ENCODE measurements at regions of chr1 and their contacts with region 1.

Region 1: GRCh38 chr1:115980998-115981993 is 5.0 kb downstream of the SLC22A15 start:
- DNase-seq: no peak
- ATAC-seq: peak; percentile 78
- H3K4me3 ChIP-seq: no peak overlapping the region
- H3K27ac ChIP-seq: no peak overlapping the region
- H3K4me1 ChIP-seq: no peaks in the 10 kb centered on the region
- H3K27me3 ChIP-seq: no peaks in the 10 kb centered on the region
- CTCF ChIP-seq: peak; percentile 62 to 68 (median 67)
- EP300 ChIP-seq: no peak
- POLR2A ChIP-seq: no peak
- RAD21 ChIP-seq: peak; percentile 82

Region 2: DNA sequence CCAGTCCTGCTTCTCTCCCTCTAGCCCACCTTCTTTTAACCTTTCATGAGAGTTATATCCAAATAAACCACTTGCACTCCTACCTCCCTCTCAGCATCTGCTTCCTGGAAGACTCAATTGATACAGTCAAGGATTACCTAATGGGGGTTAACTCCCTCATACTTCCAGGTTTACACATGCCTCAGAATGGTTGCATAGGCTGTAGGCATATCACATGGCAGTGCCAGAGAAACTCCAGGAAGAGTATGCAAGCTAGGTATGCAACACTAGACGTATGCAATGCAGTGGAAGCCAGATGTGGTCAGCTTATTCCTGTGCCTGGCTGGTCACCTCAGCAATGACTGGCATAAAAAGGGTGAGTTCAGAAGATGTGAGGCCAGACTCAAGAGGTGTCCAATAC is 372.3 kb before region 1 on chr1:
- CTCF ChIA-PET with region 1: interaction called, 5 read pairs
- POLR2A ChIA-PET with region 1: no interaction called
- RAD21 ChIA-PET with region 1: no interaction called
- SMC1A ChIA-PET with region 1: interaction called, 3 read pairs
- in situ Hi-C with region 1: no loop called
- intact Hi-C with region 1: loop called (anchors 5 kb)
- DNase-seq: no peak
- ATAC-seq: no peak
- H3K4me3 ChIP-seq: no peak overlapping the region
- H3K27ac ChIP-seq: no peak overlapping the region
- H3K4me1 ChIP-seq: no peaks in the 10 kb centered on the region
- H3K27me3 ChIP-seq: no peaks in the 10 kb centered on the region
- CTCF ChIP-seq: no peak
- EP300 ChIP-seq: no peak
- POLR2A ChIP-seq: no peak
- RAD21 ChIP-seq: no peak

Region 3: DNA sequence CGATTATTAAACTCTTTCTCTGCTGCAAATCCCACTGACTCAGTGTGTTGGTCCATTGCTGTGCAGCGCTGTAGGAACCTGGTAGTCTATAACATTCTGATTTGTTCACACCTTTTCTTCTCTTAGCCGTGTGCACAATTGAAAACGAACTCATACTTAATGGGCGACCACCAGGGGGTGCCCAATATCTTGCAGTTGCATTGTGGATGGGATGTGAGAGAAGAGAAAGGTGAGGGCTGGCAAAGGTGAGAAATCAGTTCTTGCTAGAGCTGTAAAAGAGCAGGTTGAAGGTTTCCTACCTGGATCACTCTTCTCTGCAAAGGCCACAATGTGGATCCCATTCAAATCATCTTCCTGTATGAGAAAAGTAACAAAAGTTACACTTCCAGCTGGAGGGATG is 263.8 kb before region 1 on chr1:
- CTCF ChIA-PET with region 1: interaction called, 5 read pairs
- POLR2A ChIA-PET with region 1: no interaction called
- RAD21 ChIA-PET with region 1: interaction called, 3 read pairs
- SMC1A ChIA-PET with region 1: interaction called, 5 read pairs
- in situ Hi-C with region 1: no loop called
- intact Hi-C with region 1: loop called (anchors 5 kb)
- DNase-seq: no peak
- ATAC-seq: peak; percentile 83
- H3K4me3 ChIP-seq: no peak overlapping the region
- H3K27ac ChIP-seq: no peak overlapping the region
- H3K4me1 ChIP-seq: no peaks in the 10 kb centered on the region
- H3K27me3 ChIP-seq: no peaks in the 10 kb centered on the region; a peak in 2 of 4 replicates
- CTCF ChIP-seq: peak; percentile 58 to 61 (median 58); a peak in 5 of 6 replicates
- EP300 ChIP-seq: no peak
- POLR2A ChIP-seq: no peak
- RAD21 ChIP-seq: peak; percentile 93

Region 4: DNA sequence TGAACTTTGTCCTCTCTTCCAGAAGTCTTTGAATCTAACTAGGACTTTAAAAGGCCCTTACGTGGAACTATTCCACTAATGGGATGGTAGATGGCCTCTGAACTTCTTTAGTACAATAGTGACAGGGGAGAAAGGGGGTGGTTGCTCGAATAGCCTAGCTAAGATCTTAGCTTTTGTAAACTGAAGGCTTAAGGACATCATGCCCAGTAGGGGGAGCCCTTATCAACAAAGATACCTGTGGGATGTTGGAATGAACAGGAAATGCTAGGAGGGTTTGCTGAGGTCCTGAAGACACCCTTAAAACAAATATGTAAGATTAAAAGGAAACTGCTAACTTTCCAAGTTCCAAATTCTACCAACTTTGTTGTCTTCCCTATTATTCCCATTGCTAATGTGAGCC is 173.6 kb before region 1 on chr1:
- CTCF ChIA-PET with region 1: interaction called, 132 read pairs
- POLR2A ChIA-PET with region 1: no interaction called
- RAD21 ChIA-PET with region 1: interaction called, 13 read pairs
- SMC1A ChIA-PET with region 1: interaction called, 9 read pairs
- in situ Hi-C with region 1: loop called (anchors 5 kb)
- intact Hi-C with region 1: loop called (anchors 1 kb)
- DNase-seq: peak; percentile 13
- ATAC-seq: peak; percentile 86
- H3K4me3 ChIP-seq: no peak overlapping the region
- H3K27ac ChIP-seq: no peak overlapping the region
- H3K4me1 ChIP-seq: no peaks in the 10 kb centered on the region
- H3K27me3 ChIP-seq: peaks cover 0 to 2% of the 10 kb centered on the region in 2 experiments; a peak in 1 of 4 replicates
- CTCF ChIP-seq: peak; percentile 66 to 73 (median 73); a peak in 5 of 6 replicates
- EP300 ChIP-seq: no peak
- POLR2A ChIP-seq: no peak
- RAD21 ChIP-seq: peak; percentile 70

Region 5: GRCh38 chr1:115991909-115992308 is 10.6 kb after region 1 on chr1:
- CTCF ChIA-PET with region 1: interaction called, 11 read pairs
- POLR2A ChIA-PET with region 1: no interaction called
- RAD21 ChIA-PET with region 1: interaction called, 5 read pairs
- SMC1A ChIA-PET with region 1: interaction called, 4 read pairs
- in situ Hi-C with region 1: no loop called
- intact Hi-C with region 1: no loop called
- DNase-seq: no peak
- ATAC-seq: no peak
- H3K4me3 ChIP-seq: no peak overlapping the region
- H3K27ac ChIP-seq: no peak overlapping the region
- H3K4me1 ChIP-seq: no peaks in the 10 kb centered on the region
- H3K27me3 ChIP-seq: no peaks in the 10 kb centered on the region
- CTCF ChIP-seq: no peak
- EP300 ChIP-seq: no peak
- POLR2A ChIP-seq: no peak
- RAD21 ChIP-seq: no peak

Region 6: DNA sequence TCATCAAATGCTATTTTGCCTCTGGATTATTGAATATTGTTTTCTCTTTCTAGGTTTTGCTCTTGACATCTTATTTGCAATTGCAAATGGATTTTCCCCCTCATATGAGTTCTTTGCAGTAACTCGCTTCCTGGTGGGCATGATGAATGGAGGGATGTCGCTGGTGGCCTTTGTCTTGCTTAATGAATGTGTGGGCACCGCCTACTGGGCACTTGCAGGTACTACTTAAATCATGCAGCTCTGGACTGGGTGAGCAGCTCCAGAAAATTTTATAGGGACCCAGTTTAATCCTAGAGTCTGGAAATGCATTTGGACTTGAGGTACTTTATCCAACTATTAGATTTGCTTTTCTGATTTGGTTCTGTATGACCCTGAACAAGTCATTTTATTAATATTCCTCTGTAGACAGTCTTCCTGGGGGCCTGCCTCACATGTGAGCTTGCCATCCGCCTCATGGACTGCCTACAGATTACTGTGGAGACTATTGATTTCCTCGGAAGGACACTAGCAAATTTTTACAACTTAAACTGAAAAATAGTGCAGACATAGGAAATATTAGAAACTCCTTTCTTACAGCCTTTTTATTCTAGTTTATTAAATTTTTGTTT is 39.5 kb after region 1 on chr1:
- CTCF ChIA-PET with region 1: interaction called, 54 read pairs
- POLR2A ChIA-PET with region 1: no interaction called
- RAD21 ChIA-PET with region 1: interaction called, 12 read pairs
- SMC1A ChIA-PET with region 1: interaction called, 7 read pairs
- in situ Hi-C with region 1: no loop called
- intact Hi-C with region 1: no loop called
- DNase-seq: no peak
- ATAC-seq: peak; percentile 97
- H3K4me3 ChIP-seq: no peak overlapping the region
- H3K27ac ChIP-seq: no peak overlapping the region
- H3K4me1 ChIP-seq: no peaks in the 10 kb centered on the region
- H3K27me3 ChIP-seq: no peaks in the 10 kb centered on the region
- CTCF ChIP-seq: peak; percentile 72 to 85 (median 79)
- EP300 ChIP-seq: no peak
- POLR2A ChIP-seq: no peak
- RAD21 ChIP-seq: peak; percentile 70

Measured in GM12878 (cell line).